ENCODE measurements at regions of chr7 and their contacts with region 1.

Region 1: DNA sequence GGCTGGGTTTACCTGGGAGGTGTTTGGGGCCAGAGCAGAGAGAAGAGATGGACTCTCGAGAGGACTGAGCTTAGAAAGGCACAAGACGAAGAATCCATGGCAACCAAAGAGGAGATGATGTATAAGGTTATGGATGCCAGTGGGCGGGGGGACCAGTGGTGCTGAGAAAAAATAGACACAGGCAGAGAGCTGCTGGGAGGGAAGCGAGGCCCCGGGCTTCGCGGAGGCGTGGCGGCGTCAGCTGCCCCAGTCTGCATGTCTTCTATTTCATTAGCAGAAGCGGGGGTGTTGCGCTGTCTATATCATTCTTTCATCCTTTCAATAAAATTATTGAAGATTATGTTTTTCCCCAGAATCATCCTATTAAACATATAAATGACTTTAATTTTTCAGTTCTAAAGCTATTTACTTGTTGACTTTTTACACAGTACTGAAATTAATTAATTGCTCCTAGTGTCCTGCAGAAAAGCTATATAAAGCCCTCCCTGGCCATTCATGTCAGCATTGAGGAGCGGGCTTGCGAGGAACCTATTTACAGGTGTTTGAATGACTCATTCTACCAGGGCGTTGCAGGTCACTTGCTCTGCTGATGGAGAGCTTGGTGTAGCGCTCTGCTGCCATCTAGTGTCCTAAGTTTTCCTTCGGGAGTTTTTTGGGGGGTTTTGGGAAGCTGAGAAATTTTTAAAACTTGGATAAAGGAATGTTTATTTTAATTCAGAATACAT is 42.9 kb upstream of the BHLHA15 start:
- DNase-seq: peak; percentile 67
- H3K4me3 ChIP-seq: no peak overlapping the region
- H3K27ac ChIP-seq: no peak overlapping the region
- H3K4me1 ChIP-seq: peaks cover 3% of the 10 kb centered on the region
- H3K27me3 ChIP-seq: no peaks in the 10 kb centered on the region
- CTCF ChIP-seq: peak; percentile 66 to 73
- POLR2A ChIP-seq: no peak

Region 2: GRCh38 chr7:98106647-98107445 is 61.5 kb before region 1 on chr7 and contains the start of gene LMTK2:
- CTCF ChIA-PET with region 1: interaction called, 135 read pairs
- POLR2A ChIA-PET with region 1: no interaction called
- dilution Hi-C with region 1: no loop called
- intact Hi-C with region 1: loop called (anchors 1 kb)
- DNase-seq: peak; percentile 95
- H3K4me3 ChIP-seq: peak within 1 kb of the TSS; percentile 70 to 86 (median 80)
- H3K27ac ChIP-seq: peak within 1 kb of the TSS; percentile 68
- H3K4me1 ChIP-seq: peaks cover 32% of the 10 kb centered on the region
- H3K27me3 ChIP-seq: no peaks in the 10 kb centered on the region
- CTCF ChIP-seq: peak; percentile 87 to 96
- POLR2A ChIP-seq: peak; percentile 83
- total RNA-seq, gene LMTK2: 13.8 and 16.6 TPM in 2 replicates

Region 3: DNA sequence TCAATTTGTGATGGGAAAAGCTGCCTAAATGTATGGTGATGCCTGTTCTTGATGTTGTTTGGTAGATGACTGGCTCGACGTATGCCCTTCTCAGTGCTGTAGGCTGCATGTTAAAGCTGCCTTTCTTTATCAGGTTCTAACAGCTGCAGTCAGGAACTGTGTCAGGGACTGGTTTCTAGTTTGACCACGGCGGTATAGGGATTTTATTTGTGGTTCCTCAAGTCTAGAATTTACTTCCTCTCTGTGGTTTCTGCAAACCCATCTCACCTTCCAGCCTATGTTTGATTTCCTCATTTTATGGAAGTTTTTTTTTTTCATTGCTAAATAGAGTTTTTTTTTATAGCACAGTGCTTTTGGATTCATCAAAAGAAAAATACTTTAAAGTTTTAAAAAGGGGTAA is 35.2 kb before region 1 on chr7:
- CTCF ChIA-PET with region 1: interaction called, 23 read pairs
- POLR2A ChIA-PET with region 1: no interaction called
- dilution Hi-C with region 1: no loop called
- intact Hi-C with region 1: no loop called
- DNase-seq: no peak
- H3K4me3 ChIP-seq: no peak overlapping the region
- H3K27ac ChIP-seq: no peak overlapping the region
- H3K4me1 ChIP-seq: peaks cover 30% of the 10 kb centered on the region
- H3K27me3 ChIP-seq: no peaks in the 10 kb centered on the region
- CTCF ChIP-seq: no peak
- POLR2A ChIP-seq: no peak

Region 4: GRCh38 chr7:98149116-98149692 is 19.1 kb before region 1 on chr7:
- CTCF ChIA-PET with region 1: interaction called, 13 read pairs
- POLR2A ChIA-PET with region 1: no interaction called
- dilution Hi-C with region 1: no loop called
- intact Hi-C with region 1: no loop called
- DNase-seq: no peak
- H3K4me3 ChIP-seq: no peak overlapping the region
- H3K27ac ChIP-seq: no peak overlapping the region
- H3K4me1 ChIP-seq: no peaks in the 10 kb centered on the region
- H3K27me3 ChIP-seq: no peaks in the 10 kb centered on the region
- CTCF ChIP-seq: no peak
- POLR2A ChIP-seq: no peak

Region 5: GRCh38 chr7:98240961-98241674 is 72.8 kb after region 1 on chr7:
- CTCF ChIA-PET with region 1: no interaction called
- POLR2A ChIA-PET with region 1: no interaction called
- dilution Hi-C with region 1: no loop called
- intact Hi-C with region 1: loop called (anchors 1 kb)
- DNase-seq: peak; percentile 54
- H3K4me3 ChIP-seq: no peak overlapping the region
- H3K27ac ChIP-seq: no peak overlapping the region
- H3K4me1 ChIP-seq: peaks cover 12% of the 10 kb centered on the region
- H3K27me3 ChIP-seq: no peaks in the 10 kb centered on the region
- CTCF ChIP-seq: peak; percentile 86 to 93
- POLR2A ChIP-seq: no peak

Measured in endothelial cell of umbilical vein (primary cell).